AG04450 (cell line): ENCODE measurements at regions of chr4 and their contacts with region 1.

Region 1: GRCh38 chr4:146389561-146389960 is 132.2 kb downstream of the SLC10A7 start:
- DNase-seq: no peak
- H3K4me3 ChIP-seq: no peak overlapping the region
- H3K27ac ChIP-seq: no peak overlapping the region
- H3K27me3 ChIP-seq: no peaks in the 10 kb centered on the region
- CTCF ChIP-seq: no peak

Region 2: GRCh38 chr4:145186729-145187128 is 1202.8 kb before region 1 on chr4:
- CTCF ChIA-PET with region 1: no interaction called
- POLR2A ChIA-PET with region 1: no interaction called
- DNase-seq: no peak
- H3K4me3 ChIP-seq: no peak overlapping the region
- H3K27ac ChIP-seq: no peak overlapping the region
- H3K27me3 ChIP-seq: peaks cover 3% of the 10 kb centered on the region
- CTCF ChIP-seq: no peak

Region 3: GRCh38 chr4:146401274-146401673 is 11.7 kb after region 1 on chr4:
- CTCF ChIA-PET with region 1: no interaction called
- POLR2A ChIA-PET with region 1: no interaction called
- DNase-seq: no peak
- H3K4me3 ChIP-seq: no peak overlapping the region
- H3K27ac ChIP-seq: no peak overlapping the region
- H3K27me3 ChIP-seq: no peaks in the 10 kb centered on the region
- CTCF ChIP-seq: no peak

Region 4: GRCh38 chr4:146545102-146545501 is 155.5 kb after region 1 on chr4:
- CTCF ChIA-PET with region 1: interaction called, 15 read pairs
- POLR2A ChIA-PET with region 1: no interaction called
- DNase-seq: no peak
- H3K4me3 ChIP-seq: no peak overlapping the region
- H3K27ac ChIP-seq: no peak overlapping the region
- H3K27me3 ChIP-seq: no peaks in the 10 kb centered on the region
- CTCF ChIP-seq: peak; percentile 42